A673 (cell line): ENCODE measurements at regions of chr15 and their contacts with region 1.

Region 1: GRCh38 chr15:35751413-35752133 is 205.6 kb upstream of the DPH6 start:
- DNase-seq: peak; percentile 86
- H3K4me3 ChIP-seq: peak overlapping the region; percentile 6
- H3K27ac ChIP-seq: no peak overlapping the region
- H3K4me1 ChIP-seq: peaks cover 5% of the 10 kb centered on the region
- H3K27me3 ChIP-seq: no peaks in the 10 kb centered on the region
- CTCF ChIP-seq: peak; percentile 86

Region 2: DNA sequence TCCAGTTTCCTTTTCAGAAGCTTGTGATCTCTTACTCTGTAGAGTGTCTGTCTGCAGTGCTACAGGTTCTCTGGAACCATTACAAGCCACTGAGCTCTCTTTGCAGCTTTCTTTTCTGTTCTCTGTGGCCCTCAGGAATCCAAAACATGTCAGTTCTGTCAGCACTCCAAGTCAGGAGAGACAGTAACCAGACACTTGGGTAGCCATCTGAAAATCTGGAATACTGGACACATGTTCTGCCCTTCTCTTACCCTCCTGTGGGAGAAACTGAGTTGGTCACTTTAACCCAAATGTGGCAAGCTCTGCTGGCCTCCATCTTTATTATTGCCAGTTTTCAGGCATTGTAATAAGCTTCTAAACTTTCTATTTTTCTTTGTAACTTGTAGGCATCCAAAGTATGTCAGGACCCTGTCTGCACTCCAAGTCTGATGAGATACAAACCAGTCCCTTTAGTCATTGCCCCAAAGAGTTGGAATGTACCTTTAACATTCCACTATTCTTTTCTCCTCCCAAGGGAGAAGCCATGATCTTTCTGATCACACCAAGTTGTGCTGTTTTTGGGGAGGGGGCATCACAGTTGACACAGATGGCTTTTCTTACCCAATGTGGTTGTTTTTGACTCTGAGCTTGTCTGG is 389.3 kb before region 1 on chr15:
- CTCF ChIA-PET with region 1: no interaction called
- POLR2A ChIA-PET with region 1: no interaction called
- intact Hi-C with region 1: no loop called
- DNase-seq: no peak
- H3K4me3 ChIP-seq: no peak overlapping the region
- H3K27ac ChIP-seq: no peak overlapping the region
- H3K4me1 ChIP-seq: no peaks in the 10 kb centered on the region
- H3K27me3 ChIP-seq: no peaks in the 10 kb centered on the region
- CTCF ChIP-seq: no peak

Region 3: DNA sequence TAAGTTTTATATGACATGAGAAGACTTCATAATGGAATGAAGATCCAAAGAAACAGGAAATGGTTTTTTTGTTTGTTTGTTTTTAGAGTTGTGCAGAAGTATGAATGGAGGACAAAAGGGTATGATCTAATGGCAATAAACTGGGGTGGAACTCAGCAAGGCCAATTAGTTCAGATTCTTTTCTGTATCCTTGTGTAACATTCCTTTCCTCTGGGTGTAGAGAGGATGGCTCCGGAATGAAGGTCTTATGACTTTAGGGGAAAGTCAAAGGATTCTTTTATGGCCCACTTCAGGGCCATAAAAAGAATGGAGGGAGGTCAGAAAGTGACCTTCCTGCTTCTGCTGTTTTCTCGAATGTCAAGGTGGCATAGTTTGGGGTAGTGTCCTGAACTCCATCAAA is 358.2 kb before region 1 on chr15:
- CTCF ChIA-PET with region 1: no interaction called
- POLR2A ChIA-PET with region 1: no interaction called
- intact Hi-C with region 1: no loop called
- DNase-seq: no peak
- H3K4me3 ChIP-seq: no peak overlapping the region
- H3K27ac ChIP-seq: no peak overlapping the region
- H3K4me1 ChIP-seq: no peaks in the 10 kb centered on the region
- H3K27me3 ChIP-seq: no peaks in the 10 kb centered on the region
- CTCF ChIP-seq: no peak

Region 4: GRCh38 chr15:35852818-35853624 is 101.4 kb after region 1 on chr15:
- CTCF ChIA-PET with region 1: interaction called, 11 read pairs
- POLR2A ChIA-PET with region 1: no interaction called
- intact Hi-C with region 1: no loop called
- DNase-seq: peak; percentile 39
- H3K4me3 ChIP-seq: no peak overlapping the region
- H3K27ac ChIP-seq: peak overlapping the region; percentile 61
- H3K4me1 ChIP-seq: peaks cover 67% of the 10 kb centered on the region
- H3K27me3 ChIP-seq: no peaks in the 10 kb centered on the region
- CTCF ChIP-seq: no peak

Region 5: GRCh38 chr15:35912196-35912595 is 160.6 kb after region 1 on chr15:
- CTCF ChIA-PET with region 1: interaction called, 11 read pairs
- POLR2A ChIA-PET with region 1: no interaction called
- intact Hi-C with region 1: loop called (anchors 2 kb)
- DNase-seq: peak; percentile 58
- H3K4me3 ChIP-seq: no peak overlapping the region
- H3K27ac ChIP-seq: no peak overlapping the region
- H3K4me1 ChIP-seq: no peaks in the 10 kb centered on the region
- H3K27me3 ChIP-seq: no peaks in the 10 kb centered on the region
- CTCF ChIP-seq: peak; percentile 60